Common myeloid progenitor, CD34-positive (primary cell): ENCODE measurements at regions of chr1 and their contacts with region 1.

Region 1: GRCh38 chr1:8348777-8349491 is 31.0 kb downstream of the SLC45A1 start:
- DNase-seq: peak; percentile 47 to 75 (median 66)
- H3K4me3 ChIP-seq: no peak overlapping the region
- H3K27ac ChIP-seq: no peak overlapping the region
- H3K4me1 ChIP-seq: no peaks in the 10 kb centered on the region
- H3K27me3 ChIP-seq: peaks cover 0 to 3% (median 0%) of the 10 kb centered on the region in 5 experiments

Region 2: DNA sequence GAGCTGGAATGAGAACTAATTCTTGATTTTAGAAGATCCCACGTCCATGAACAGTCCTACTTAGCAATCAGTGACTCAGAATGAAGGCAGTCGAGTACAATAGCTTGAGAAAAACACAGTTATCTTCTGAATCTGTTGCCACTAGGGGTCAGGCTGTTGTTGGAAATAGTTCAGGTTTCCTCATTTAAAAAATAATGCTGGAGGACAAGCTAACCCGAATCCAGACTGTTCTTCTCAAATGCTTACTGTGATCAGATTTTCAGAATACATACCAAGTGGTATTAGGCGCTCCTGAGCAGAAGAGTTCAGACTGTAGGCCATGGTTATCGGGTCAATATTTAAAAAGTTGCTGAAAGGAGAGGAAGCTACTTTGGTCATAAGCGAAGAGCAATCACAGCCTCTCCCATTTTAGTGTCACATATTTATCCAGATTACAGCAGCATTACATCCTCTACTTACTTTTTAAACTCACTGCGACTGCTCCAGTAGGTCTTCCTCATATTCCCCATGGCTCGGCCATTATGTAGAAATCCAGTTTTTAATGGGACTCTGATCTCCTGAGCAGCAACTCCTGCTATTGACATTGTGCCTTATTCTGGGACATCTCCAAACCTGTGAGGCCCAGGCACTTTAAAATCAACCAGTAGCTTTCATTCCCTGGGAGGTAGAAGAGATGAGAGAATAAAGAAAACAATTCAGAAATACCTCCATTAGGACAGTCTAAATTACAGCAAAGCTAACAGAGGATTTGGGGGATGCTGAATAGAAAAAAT is 333.7 kb before region 1 on chr1:
- CTCF ChIA-PET with region 1: interaction called, 108 read pairs
- POLR2A ChIA-PET with region 1: no interaction called
- DNase-seq: peak; percentile 65 to 82 (median 77)
- H3K4me3 ChIP-seq: no peak overlapping the region
- H3K27ac ChIP-seq: no peak overlapping the region
- H3K4me1 ChIP-seq: no peaks in the 10 kb centered on the region
- H3K27me3 ChIP-seq: peaks cover 8 to 18% (median 11%) of the 10 kb centered on the region in 5 experiments

Region 3: GRCh38 chr1:8026153-8026975 is 322.6 kb before region 1 on chr1 and contains the start of gene ERRFI1:
- CTCF ChIA-PET with region 1: interaction called, 29 read pairs
- POLR2A ChIA-PET with region 1: no interaction called
- DNase-seq: peak; percentile 86 to 92 (median 90)
- H3K4me3 ChIP-seq: peak within 1 kb of the TSS in 4 of 7 experiments; percentile 40 to 62 (median 56)
- H3K27ac ChIP-seq: no peak within 1 kb of the TSS
- H3K4me1 ChIP-seq: peaks cover 4 to 15% (median 14%) of the 10 kb centered on the region in 4 experiments
- H3K27me3 ChIP-seq: peaks cover 19 to 52% (median 28%) of the 10 kb centered on the region in 5 experiments

Region 4: DNA sequence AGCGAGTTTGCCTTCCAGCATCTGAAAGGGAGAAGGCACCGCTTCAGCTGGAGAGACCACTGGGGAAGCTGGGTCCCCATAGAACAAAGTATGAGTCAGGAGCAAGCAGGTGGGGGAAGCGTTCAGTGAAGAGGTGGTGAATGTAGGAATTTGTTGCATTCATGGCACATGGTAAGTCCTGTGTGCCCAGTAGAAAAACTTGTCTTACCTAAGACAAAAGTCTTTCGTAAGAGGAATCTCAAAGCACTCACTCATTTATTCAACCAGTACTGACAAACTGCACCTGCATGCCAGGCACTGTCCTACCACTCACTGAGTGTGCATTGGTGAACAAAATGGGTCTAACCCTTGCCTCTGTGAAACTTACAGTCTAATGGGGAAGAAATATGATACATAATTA is 313.6 kb before region 1 on chr1:
- CTCF ChIA-PET with region 1: interaction called, 29 read pairs
- POLR2A ChIA-PET with region 1: no interaction called
- DNase-seq: no peak
- H3K4me3 ChIP-seq: no peak overlapping the region
- H3K27ac ChIP-seq: no peak overlapping the region
- H3K4me1 ChIP-seq: no peaks in the 10 kb centered on the region
- H3K27me3 ChIP-seq: peaks cover 0 to 5% (median 0%) of the 10 kb centered on the region in 5 experiments

Region 5: DNA sequence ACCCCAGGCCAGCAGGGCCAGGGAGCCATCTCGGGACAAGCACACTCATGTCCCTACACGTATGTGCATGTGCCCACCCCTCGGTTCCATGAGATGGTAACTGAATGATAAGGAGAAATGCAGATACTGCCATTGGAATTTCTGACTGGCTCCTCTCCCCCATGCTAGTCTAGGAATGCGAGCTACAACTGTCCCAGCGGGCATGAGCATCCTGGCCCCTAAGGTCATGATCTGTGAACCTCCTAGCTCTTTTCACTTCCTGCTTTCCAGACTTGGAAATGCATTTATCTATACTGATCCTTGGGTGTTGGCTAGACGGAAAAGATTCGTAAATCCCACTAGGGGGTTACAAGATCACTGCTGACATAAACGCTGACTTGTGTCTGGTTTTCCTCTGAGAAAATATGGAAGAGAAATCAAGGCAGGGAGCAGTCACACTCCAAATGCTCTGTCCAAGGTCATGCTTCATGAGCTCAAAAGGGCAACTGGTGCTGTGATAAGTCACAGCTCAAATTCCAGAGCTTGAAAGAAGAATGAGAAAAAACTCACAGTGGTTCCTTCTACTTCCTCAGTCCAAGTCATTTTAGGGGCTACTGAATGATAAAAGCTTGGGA is 18.7 kb after region 1 on chr1:
- CTCF ChIA-PET with region 1: interaction called, 12 read pairs
- POLR2A ChIA-PET with region 1: no interaction called
- DNase-seq: no peak
- H3K4me3 ChIP-seq: no peak overlapping the region
- H3K27ac ChIP-seq: no peak overlapping the region
- H3K4me1 ChIP-seq: peaks cover 0 to 5% (median 0%) of the 10 kb centered on the region in 4 experiments
- H3K27me3 ChIP-seq: no peaks in the 10 kb centered on the region

Region 6: GRCh38 chr1:8378178-8378577 is 29.2 kb after region 1 on chr1:
- CTCF ChIA-PET with region 1: no interaction called
- POLR2A ChIA-PET with region 1: no interaction called
- DNase-seq: no peak
- H3K4me3 ChIP-seq: no peak overlapping the region
- H3K27ac ChIP-seq: peak overlapping the region in 1 of 2 experiments; percentile 2
- H3K4me1 ChIP-seq: peaks cover 20 to 42% (median 35%) of the 10 kb centered on the region in 4 experiments
- H3K27me3 ChIP-seq: no peaks in the 10 kb centered on the region